AG04450 (cell line): ENCODE measurements at regions of chr17 and their contacts with region 1.

Region 1: DNA sequence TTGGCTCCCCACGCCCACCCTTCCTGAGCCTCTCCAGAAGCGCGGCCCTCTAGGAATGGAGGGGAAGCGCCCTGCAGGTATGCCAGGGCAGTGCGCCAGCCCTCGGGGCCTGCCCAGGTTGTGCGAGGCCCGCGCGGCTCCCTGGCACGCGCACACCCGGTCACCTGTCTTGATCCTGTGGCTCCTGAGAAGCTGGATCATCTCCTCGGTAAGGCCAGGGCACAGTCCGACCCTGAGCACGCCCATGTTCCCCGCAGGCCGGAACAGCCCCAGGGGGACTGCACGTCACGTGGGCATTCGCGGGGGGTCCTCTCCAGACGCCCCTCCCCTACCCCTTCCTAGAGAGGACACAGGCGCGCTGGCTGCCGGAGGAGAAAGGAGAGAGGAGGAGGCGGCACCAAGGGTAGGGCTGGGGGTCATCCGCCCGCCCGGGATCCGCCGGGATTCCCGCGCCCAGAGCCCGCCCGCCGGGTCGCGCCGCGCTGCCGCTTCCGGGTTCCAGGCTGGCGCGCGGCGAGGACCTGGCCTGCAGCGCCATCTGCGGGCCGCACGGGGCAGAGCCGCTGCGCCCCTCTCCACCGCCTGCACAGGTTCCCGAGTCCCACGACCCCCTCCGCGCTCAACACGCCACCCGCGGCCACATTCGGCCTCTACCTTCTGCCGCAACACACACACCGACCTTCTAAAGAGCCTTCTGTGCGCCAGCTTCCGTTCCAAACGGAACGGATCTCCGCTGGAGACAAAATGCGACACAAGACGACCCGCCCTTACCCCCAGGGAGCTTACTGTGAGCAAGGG is at the start of gene RAD51D:
- DNase-seq: peak; percentile 15
- H3K4me3 ChIP-seq: peak within 1 kb of the TSS; percentile 85
- H3K27ac ChIP-seq: peak within 1 kb of the TSS; percentile 39
- H3K27me3 ChIP-seq: no peaks in the 10 kb centered on the region
- CTCF ChIP-seq: peak; percentile 71
- polyA plus RNA-seq, gene RAD51D: 14.3 and 15.1 TPM in 2 replicates

Region 2: GRCh38 chr17:34542700-34543336 is 576.7 kb before region 1 on chr17:
- CTCF ChIA-PET with region 1: interaction called, 19 read pairs
- POLR2A ChIA-PET with region 1: no interaction called
- DNase-seq: no peak
- H3K4me3 ChIP-seq: no peak overlapping the region
- H3K27ac ChIP-seq: no peak overlapping the region
- H3K27me3 ChIP-seq: no peaks in the 10 kb centered on the region
- CTCF ChIP-seq: peak; percentile 79

Region 3: DNA sequence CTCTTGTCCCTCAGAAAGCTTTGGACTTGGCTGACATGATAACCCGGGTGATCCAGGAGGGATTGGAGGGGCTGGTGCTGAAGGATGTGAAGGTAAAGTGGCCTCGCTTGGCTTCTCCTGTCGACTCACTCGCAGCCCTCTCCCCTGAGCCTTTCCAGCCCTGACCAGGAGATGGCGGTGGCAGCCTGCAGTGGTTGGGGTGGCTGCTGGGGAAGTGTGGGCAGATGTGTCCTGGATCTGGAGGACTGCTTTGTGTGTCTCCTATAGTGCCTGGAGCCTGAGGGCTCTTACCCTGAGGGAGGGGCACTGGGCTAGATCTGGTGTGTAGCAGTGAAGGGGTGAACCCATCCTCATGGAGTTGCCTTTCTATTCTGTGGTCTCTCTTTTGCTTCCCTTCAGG is 121.4 kb before region 1 on chr17:
- CTCF ChIA-PET with region 1: interaction called, 41 read pairs
- POLR2A ChIA-PET with region 1: interaction called, 4 read pairs
- DNase-seq: peak; percentile 51
- H3K4me3 ChIP-seq: no peak overlapping the region
- H3K27ac ChIP-seq: peak overlapping the region; percentile 63
- H3K27me3 ChIP-seq: no peaks in the 10 kb centered on the region
- CTCF ChIP-seq: peak; percentile 93

Region 4: DNA sequence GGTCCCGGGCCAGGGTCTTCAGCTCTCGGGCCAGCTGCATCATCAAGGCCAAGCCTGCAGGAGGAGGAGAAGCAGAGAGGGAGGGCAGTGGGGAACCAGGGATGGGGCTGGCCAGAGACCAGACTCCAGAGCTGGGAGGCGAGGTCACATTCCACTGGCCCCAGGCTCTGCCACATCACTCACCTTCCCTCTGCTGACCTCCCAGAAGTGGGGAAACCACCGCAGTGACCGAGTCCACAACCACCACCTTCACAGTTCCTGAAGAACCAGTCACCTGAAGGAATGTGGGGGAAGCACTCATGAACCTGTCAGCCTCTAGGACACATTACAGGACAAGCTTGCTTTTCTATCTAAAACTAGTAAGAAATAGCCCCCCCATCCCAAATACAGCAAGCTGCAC is 16.3 kb before region 1 on chr17:
- CTCF ChIA-PET with region 1: interaction called, 12 read pairs
- POLR2A ChIA-PET with region 1: no interaction called
- DNase-seq: no peak
- H3K4me3 ChIP-seq: no peak overlapping the region
- H3K27ac ChIP-seq: no peak overlapping the region
- H3K27me3 ChIP-seq: no peaks in the 10 kb centered on the region
- CTCF ChIP-seq: no peak